HEK293 (cell line): ENCODE measurements at regions of chr6 and their contacts with region 1.

Region 1: DNA sequence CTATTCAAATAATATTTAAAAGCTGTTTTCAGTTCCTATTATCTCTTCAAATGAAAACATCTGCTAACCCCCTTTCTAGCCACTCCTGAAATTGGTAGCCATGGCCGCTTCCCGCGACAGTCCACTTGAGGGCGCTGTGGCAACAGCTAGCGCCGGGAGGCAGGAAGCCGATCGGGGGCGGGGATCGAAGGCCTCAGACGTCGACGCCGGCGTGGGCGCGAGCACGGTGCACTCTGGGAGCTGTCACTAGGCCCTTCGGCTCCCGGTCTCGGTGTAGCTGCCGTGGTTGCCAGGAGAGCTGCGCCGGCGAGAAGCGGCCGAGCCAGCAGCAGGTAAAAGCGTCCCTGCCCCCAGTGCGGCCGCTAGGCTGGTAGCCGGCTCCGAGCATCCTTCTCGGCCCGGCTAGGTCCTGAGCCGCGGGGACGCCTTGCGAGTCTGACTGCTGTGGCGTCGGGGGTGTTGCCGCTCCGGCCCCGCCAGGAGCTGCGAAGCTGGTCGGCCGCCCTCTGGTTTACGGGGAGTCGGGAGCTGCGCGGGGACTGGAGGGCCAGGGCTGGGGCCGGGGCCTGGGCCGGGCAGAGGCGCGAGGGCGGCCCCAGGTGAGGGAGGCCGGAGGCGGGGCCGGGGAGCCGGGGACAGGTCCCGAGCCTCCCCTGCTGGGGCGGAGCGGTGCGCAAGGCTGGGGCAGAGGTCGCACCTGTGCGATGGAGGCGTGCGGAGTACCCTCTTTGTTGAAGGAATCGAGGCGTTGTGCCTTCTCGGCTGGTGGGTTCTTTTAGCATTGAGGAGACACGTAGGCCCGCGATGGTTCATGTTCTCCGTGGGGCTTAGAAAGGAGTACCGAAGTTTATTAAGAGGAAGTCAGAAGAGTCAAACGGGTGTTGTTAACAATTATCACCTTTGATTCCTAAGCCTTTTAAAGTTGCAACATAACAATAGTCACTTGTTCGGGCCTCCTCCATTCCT is at the start of gene DOP1A:
- H3K4me3 ChIP-seq: peak within 1 kb of the TSS; percentile 96
- H3K27ac ChIP-seq: peak within 1 kb of the TSS; percentile 94
- H3K4me1 ChIP-seq: peaks cover 21% of the 10 kb centered on the region; the same call in 1 of the 2 replicates
- CTCF ChIP-seq: peak; percentile 95

Region 2: GRCh38 chr6:82257088-82257772 is 810.5 kb before region 1 on chr6:
- CTCF ChIA-PET with region 1: interaction called, 27 read pairs
- POLR2A ChIA-PET with region 1: interaction called, 9 read pairs
- H3K4me3 ChIP-seq: no peak overlapping the region
- H3K27ac ChIP-seq: no peak overlapping the region
- H3K4me1 ChIP-seq: peaks cover 25% of the 10 kb centered on the region
- CTCF ChIP-seq: no peak; the same call in 1 of the 2 replicates

Region 3: GRCh38 chr6:82980086-82980485 is 87.6 kb before region 1 on chr6:
- CTCF ChIA-PET with region 1: no interaction called
- POLR2A ChIA-PET with region 1: no interaction called
- H3K4me3 ChIP-seq: no peak overlapping the region
- H3K27ac ChIP-seq: no peak overlapping the region
- H3K4me1 ChIP-seq: no peaks in the 10 kb centered on the region
- CTCF ChIP-seq: no peak

Region 4: GRCh38 chr6:83047065-83047754 is 20.5 kb before region 1 on chr6:
- CTCF ChIA-PET with region 1: interaction called, 14 read pairs
- POLR2A ChIA-PET with region 1: interaction called, 3 read pairs
- H3K4me3 ChIP-seq: no peak overlapping the region
- H3K27ac ChIP-seq: no peak overlapping the region
- H3K4me1 ChIP-seq: peaks cover 16% of the 10 kb centered on the region; the same call in 1 of the 2 replicates
- CTCF ChIP-seq: no peak

Region 5: GRCh38 chr6:83138118-83138722 is 70.5 kb after region 1 on chr6:
- CTCF ChIA-PET with region 1: interaction called, 14 read pairs
- POLR2A ChIA-PET with region 1: no interaction called
- H3K4me3 ChIP-seq: no peak overlapping the region
- H3K27ac ChIP-seq: no peak overlapping the region
- H3K4me1 ChIP-seq: no peaks in the 10 kb centered on the region
- CTCF ChIP-seq: no peak

Region 6: DNA sequence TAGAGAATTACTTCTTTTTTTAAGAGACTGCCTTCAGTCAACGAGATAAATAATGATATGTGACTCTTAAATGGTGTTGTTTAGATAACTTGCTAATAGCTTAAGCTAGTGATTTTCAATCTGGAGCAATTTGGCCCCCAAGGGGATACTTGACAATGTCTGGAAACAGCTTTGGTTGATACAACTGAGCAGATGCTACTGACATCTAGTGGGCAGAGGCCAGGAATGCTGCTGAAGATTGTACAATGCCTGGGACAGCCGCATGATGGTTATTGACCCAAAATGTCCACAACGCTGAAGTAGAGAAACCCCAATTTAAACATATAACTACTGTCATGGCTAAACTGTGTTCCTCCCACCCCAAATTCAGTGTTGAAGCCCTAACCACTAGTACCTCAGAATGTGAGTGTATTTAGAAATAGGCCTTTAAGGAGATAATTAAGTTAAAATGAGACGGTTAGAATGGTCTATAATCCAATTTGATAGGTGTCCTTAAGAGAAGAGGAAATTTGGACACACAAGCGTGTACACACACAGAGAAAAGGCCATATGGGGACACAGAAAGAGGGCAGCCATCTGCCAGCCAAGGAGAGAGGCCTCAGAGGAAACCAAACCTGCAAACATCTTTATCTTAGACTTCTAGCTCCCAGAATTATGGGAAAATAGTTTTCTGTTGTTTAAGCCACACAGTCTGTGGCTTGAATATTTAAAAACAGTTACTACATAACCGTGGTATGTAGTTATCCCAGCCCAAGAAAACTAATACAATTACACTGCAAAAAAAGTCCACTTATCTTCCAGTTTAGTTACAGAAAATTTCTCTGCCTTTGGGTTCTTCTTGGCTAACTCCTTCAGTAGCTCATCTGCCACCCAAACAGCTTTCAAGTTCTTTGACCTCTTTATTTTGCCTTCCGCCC is 147.7 kb after region 1 on chr6:
- CTCF ChIA-PET with region 1: interaction called, 240 read pairs
- POLR2A ChIA-PET with region 1: interaction called, 11 read pairs
- H3K4me3 ChIP-seq: no peak overlapping the region
- H3K27ac ChIP-seq: no peak overlapping the region
- H3K4me1 ChIP-seq: no peaks in the 10 kb centered on the region
- CTCF ChIP-seq: peak; percentile 88

Region 7: DNA sequence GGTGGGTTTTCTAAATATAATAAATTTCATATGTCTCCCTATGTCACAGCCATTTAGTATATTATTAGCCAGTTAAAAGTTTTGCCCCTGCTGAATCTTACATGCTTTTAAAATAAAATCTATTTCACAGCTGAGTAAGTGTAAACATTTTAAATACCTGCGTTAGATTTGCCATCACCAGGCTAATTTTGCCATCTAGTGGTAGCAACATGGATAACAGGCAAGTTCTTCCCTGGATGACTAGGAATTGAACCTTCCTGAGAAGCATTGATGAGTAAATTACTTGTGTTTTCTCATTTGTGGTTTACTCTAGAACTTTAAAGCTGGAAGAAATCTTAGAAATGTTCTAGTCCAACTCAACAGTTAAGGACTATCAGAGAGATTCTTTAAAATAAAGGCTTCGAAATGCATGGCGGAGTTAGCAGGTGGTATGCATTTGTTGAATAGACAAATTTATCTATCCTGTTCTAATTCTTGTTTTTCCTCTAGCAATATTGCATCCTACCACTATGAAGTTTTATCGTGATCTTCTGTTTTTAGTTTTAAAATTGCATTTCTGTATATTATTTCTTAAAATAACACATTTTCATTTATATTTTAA is 447.2 kb after region 1 on chr6:
- CTCF ChIA-PET with region 1: interaction called, 182 read pairs
- POLR2A ChIA-PET with region 1: interaction called, 11 read pairs
- H3K4me3 ChIP-seq: no peak overlapping the region
- H3K27ac ChIP-seq: no peak overlapping the region
- H3K4me1 ChIP-seq: no peaks in the 10 kb centered on the region
- CTCF ChIP-seq: peak; percentile 65